Mammary epithelial cell (primary cell): ENCODE measurements at regions of chr21 and their contacts with region 1.

Region 1: GRCh38 chr21:46483300-46484295 is 24.9 kb downstream of the DIP2A start:
- DNase-seq: no peak
- H3K4me3 ChIP-seq: no peak overlapping the region
- H3K27ac ChIP-seq: no peak overlapping the region
- H3K4me1 ChIP-seq: peaks cover 3% of the 10 kb centered on the region
- H3K27me3 ChIP-seq: no peaks in the 10 kb centered on the region
- CTCF ChIP-seq: no peak

Region 2: DNA sequence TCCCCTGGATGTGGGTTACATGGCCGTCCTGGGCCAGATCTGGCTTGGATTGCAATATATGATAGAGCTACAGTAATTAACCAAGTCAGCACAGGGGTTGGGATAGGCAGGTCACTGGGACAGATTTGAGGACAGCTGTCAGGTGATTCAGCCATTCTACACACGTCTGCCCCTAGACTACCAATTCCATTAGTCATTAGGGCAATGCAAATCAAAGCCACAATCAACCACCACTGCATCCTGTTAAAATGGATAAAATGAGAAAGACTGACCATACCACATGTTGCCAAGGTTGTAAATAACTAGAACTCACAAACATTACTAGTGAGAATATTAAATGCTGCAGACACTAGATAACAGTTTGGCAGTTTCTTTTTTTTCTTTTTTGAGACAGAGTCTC is 176.0 kb before region 1 on chr21:
- CTCF ChIA-PET with region 1: no interaction called
- dilution Hi-C with region 1: no loop called
- in situ Hi-C with region 1: no loop called
- intact Hi-C with region 1: no loop called
- DNase-seq: peak; percentile 73
- H3K4me3 ChIP-seq: no peak overlapping the region
- H3K27ac ChIP-seq: peak overlapping the region; percentile 28
- H3K4me1 ChIP-seq: peaks cover 9% of the 10 kb centered on the region
- H3K27me3 ChIP-seq: no peaks in the 10 kb centered on the region
- CTCF ChIP-seq: no peak

Region 3: GRCh38 chr21:46538851-46539666 is 55.5 kb after region 1 on chr21:
- CTCF ChIA-PET with region 1: no interaction called
- dilution Hi-C with region 1: loop called (anchors 5 kb)
- in situ Hi-C with region 1: no loop called
- intact Hi-C with region 1: no loop called
- DNase-seq: no peak
- H3K4me3 ChIP-seq: no peak overlapping the region
- H3K27ac ChIP-seq: no peak overlapping the region
- H3K4me1 ChIP-seq: peaks cover 3% of the 10 kb centered on the region
- H3K27me3 ChIP-seq: no peaks in the 10 kb centered on the region
- CTCF ChIP-seq: no peak